Natural killer cell (primary cell): ENCODE measurements at regions of chr15 and their contacts with region 1.

Region 1: GRCh38 chr15:48723964-48724363 is 78.5 kb upstream of the FBN1 start:
- DNase-seq: no peak
- ATAC-seq: no peak
- H3K4me3 ChIP-seq: no peak overlapping the region
- H3K4me3 Mint-ChIP-seq: no peak overlapping the region
- H3K27ac ChIP-seq: no peak overlapping the region
- H3K27ac Mint-ChIP-seq: no peak overlapping the region
- H3K4me1 ChIP-seq: no peaks in the 10 kb centered on the region
- H3K4me1 Mint-ChIP-seq: no peaks in the 10 kb centered on the region
- H3K27me3 ChIP-seq: no peaks in the 10 kb centered on the region
- H3K27me3 Mint-ChIP-seq: no peaks in the 10 kb centered on the region
- CTCF ChIP-seq: no peak

Region 2: DNA sequence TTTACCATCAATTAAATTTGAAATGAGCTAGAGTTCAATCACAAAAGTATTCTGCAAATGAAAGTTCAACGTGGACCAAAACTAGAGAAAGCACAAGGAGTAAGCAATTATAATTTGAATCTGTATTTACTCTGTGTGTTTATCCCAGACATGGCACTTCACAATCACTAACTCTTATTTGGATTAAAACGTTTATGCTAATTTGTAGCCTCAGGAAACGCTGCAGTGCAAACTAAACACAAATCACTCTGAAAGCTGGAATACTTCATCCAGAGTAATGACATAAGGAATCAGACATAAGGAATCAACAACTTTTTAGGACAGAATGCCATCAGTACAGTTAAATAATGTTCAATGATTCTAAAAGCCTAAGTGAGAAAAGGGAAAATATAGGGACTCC is 68.4 kb after region 1 on chr15:
- intact Hi-C with region 1: loop called (anchors 2 kb)
- DNase-seq: no peak
- ATAC-seq: no peak
- H3K4me3 ChIP-seq: no peak overlapping the region
- H3K4me3 Mint-ChIP-seq: no peak overlapping the region
- H3K27ac ChIP-seq: no peak overlapping the region
- H3K27ac Mint-ChIP-seq: no peak overlapping the region
- H3K4me1 ChIP-seq: no peaks in the 10 kb centered on the region
- H3K4me1 Mint-ChIP-seq: peaks cover 26 to 28% of the 10 kb centered on the region in 2 donors
- H3K27me3 ChIP-seq: no peaks in the 10 kb centered on the region
- H3K27me3 Mint-ChIP-seq: no peaks in the 10 kb centered on the region
- CTCF ChIP-seq: no peak